ENCODE measurements at regions of chr9 and their contacts with region 1.

Region 1: DNA sequence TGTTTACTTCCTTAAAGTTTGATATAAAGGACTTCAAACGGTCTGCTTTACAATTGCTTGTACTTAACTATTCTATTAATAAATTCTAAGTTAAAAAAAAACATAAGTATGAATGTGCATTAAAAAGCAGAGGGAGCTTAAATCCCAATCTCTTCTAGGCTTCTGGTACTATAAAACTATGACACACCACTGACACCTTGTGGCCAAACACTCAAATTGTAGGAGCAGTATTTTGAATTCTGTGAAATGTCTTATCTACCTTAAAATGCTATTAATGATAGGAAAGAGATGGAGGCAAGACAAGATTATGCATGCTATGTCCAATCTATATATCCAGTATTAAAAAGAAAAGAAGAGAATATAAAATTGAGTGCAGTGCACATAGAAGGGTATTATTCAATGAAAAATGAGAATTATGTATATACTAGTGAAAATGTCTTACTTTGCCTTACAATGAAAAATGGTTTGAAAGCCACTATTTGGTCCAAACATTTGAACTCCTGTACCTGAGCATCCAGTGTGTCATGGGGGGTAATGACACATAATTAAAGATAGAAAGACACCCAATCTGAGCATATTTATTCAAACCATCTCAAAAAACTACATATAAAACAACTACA is 87.6 kb downstream of the ERP44 start:
- DNase-seq: peak; percentile 82
- H3K4me3 Mint-ChIP-seq: no peak overlapping the region
- H3K27ac Mint-ChIP-seq: no peak overlapping the region
- H3K4me1 Mint-ChIP-seq: no peaks in the 10 kb centered on the region
- H3K27me3 Mint-ChIP-seq: no peaks in the 10 kb centered on the region

Region 2: GRCh38 chr9:99162759-99163364 is 848.3 kb before region 1 on chr9:
- intact Hi-C with region 1: loop called (anchors 2 kb)
- DNase-seq: peak; percentile 76
- H3K4me3 Mint-ChIP-seq: no peak overlapping the region
- H3K27ac Mint-ChIP-seq: no peak overlapping the region
- H3K4me1 Mint-ChIP-seq: peaks cover 18% of the 10 kb centered on the region
- H3K27me3 Mint-ChIP-seq: peaks cover 22% of the 10 kb centered on the region

Region 3: DNA sequence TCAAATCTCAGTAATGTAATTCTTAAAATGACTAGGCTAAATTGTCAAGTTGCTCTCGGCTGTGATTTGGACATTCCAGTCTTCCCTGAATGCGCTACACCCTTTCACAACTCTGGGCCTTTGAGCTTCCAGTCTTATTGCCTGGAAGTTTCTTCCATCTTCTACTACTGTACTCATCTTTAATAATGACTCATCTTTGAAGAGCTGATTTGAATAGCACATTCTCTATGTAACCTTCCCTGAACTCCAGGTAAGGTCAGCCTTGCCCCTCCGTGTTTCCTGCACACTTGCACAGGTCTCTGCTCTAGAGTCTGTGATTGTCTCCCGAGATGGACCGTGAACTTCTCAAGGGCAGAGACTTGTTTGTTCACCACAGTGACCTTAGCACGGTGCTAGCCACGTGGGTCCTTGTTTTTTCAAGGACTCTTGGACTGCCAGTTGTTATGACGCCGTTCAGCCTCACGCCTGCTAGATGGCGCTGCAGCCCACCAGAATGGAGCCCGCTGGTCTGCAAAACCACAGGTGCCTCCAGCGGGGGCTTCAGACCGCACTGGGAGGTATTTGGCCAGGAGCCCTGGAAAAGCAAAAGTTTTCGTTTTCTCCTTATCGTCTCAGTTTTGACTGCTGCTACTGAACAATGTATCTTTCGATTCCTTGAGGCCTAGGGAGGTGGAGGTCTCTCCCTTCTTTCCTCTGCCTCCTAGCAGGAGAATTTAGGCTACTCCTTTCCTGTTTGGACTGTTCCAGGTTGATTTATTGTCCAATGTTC is 744.7 kb before region 1 on chr9:
- intact Hi-C with region 1: loop called (anchors 1 kb)
- DNase-seq: peak; percentile 88
- H3K4me3 Mint-ChIP-seq: peak overlapping the region; percentile 61
- H3K27ac Mint-ChIP-seq: peak overlapping the region; percentile 55
- H3K4me1 Mint-ChIP-seq: peaks cover 26% of the 10 kb centered on the region
- H3K27me3 Mint-ChIP-seq: peaks cover 13% of the 10 kb centered on the region

Region 4: GRCh38 chr9:99807276-99807852 is 203.8 kb before region 1 on chr9:
- intact Hi-C with region 1: loop called (anchors 1 kb)
- DNase-seq: peak; percentile 89
- H3K4me3 Mint-ChIP-seq: no peak overlapping the region
- H3K27ac Mint-ChIP-seq: no peak overlapping the region
- H3K4me1 Mint-ChIP-seq: peaks cover 23% of the 10 kb centered on the region
- H3K27me3 Mint-ChIP-seq: peaks cover 22% of the 10 kb centered on the region

Measured in activated CD4-positive, alpha-beta T cell treated with anti-CD3 and anti-CD28 coated beads, Interleukin-2, amount 10 ng/mL, durations not matched to agents 24 days and 14 days (primary cell).